ENCODE measurements at regions of chr5 and their contacts with region 1.

Region 1: DNA sequence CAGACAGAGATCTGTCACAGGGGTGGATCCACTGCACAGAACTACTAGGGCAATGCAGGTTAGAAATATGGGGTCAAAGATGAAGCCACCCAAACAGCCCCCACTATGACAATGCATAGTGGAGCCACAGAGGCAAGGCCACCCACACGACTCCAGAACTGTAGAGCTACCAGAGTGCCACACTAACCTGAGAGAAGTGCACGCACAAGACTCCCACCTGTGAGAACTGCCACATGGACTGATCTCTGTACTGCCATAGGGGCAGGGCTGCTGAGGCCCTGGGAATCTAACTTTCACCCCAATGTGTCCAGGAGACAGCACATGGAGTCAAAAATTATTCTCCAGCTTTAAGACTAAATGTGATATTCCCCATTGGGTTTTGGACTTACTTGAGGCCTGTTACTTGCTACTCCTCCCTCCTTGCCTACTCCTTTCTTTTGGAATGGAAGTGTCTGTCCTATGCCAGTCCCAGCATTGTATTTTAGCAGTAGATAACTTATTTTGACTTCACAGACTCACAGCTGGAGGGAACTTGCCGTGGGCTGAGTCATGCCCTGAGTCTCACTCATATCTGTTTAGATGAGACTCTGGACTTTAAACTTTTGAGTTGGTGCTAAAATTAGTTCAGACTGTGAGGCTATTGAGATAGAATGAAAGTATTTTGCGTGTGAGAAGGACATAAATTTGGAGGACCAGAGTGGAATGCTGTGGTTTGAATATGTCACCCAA is 853.3 kb downstream of the MAT2B start:
- DNase-seq: peak; percentile 33 to 86 (median 40)
- ATAC-seq: peak; percentile 72
- H3K4me3 ChIP-seq: peak overlapping the region; percentile 27
- H3K27ac ChIP-seq: peak overlapping the region; percentile 93
- H3K4me1 ChIP-seq: peaks cover 24 to 71% of the 10 kb centered on the region in 2 experiments
- H3K27me3 ChIP-seq: no peaks in the 10 kb centered on the region
- CTCF ChIP-seq: no peak
- EP300 ChIP-seq: peak; percentile 86
- POLR2A ChIP-seq: 0 out of 2 replicates have a peak, but pooled peaks have one; percentile 42
- RAD21 ChIP-seq: no peak

Region 2: DNA sequence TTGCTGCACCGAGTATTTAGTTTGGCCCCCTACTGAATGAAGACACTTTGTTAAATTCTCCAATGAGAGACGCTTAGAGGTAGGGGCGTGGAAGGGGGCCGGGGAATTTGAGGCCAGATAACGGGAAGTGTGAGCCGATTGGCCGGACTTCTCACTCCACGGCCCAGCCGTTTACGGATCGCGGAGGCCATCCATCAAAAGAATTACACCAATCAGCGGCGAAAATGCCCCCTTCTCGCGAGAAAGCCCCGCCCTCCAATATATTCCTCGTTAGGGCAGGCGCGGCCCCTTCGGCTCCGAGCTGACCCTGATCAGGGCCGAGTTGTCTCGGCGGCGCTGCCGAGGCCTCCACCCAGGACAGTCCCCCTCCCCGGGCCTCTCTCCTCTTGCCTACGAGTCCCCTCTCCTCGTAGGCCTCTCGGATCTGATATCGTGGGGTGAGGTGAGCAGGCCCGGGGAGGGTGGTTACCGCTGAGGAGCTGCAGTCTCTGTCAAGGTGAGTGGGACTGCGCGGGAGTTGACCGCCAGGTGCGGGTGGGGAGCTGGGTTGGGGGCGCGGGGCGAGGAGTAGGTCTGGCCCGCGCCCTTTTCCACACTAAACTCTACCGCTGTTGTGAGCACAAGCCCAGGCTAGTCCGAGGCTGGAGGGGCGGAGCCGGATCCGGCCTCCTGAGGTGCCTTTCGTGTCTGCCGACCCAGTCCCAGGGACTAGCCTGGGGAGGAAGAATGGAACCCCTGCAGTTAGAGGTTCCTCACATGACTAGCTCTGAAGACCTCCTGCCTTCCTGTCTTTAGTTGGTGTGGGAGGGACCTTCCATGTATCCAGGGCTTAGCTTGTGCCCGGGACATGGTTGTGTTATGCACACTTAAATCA is 921.1 kb before region 1 on chr5 and contains the start of gene CCNG1:
- CTCF ChIA-PET with region 1: no interaction called
- POLR2A ChIA-PET with region 1: no interaction called
- in situ Hi-C with region 1: no loop called
- intact Hi-C with region 1: loop called (anchors 5 kb)
- DNase-seq: peak; percentile 89 to 98 (median 94)
- ATAC-seq: peak; percentile 84
- H3K4me3 ChIP-seq: peak within 1 kb of the TSS; percentile 71
- H3K27ac ChIP-seq: peak within 1 kb of the TSS; percentile 80
- H3K4me1 ChIP-seq: peaks cover 3 to 33% of the 10 kb centered on the region in 2 experiments; a peak in 4 of 5 replicates
- H3K27me3 ChIP-seq: no peaks in the 10 kb centered on the region
- CTCF ChIP-seq: 0 out of 6 replicates have a peak, but pooled peaks of 1 of the 3 experiments have one; percentile 1
- EP300 ChIP-seq: no peak
- POLR2A ChIP-seq: peak; percentile 96
- RAD21 ChIP-seq: no peak
- polyA plus RNA-seq, gene CCNG1: 254 to 290 TPM

Region 3: GRCh38 chr5:163505368-163506094 is 853.2 kb before region 1 on chr5 and contains the start of gene MAT2B:
- CTCF ChIA-PET with region 1: no interaction called
- POLR2A ChIA-PET with region 1: no interaction called
- in situ Hi-C with region 1: loop called (anchors 25 kb)
- intact Hi-C with region 1: loop called (anchors 5 kb)
- DNase-seq: peak; percentile 95 to 97 (median 96)
- ATAC-seq: peak; percentile 88
- H3K4me3 ChIP-seq: peak within 1 kb of the TSS; percentile 65
- H3K27ac ChIP-seq: peak within 1 kb of the TSS; percentile 87
- H3K4me1 ChIP-seq: peaks cover 5 to 7% of the 10 kb centered on the region in 2 experiments; a peak in 3 of 5 replicates
- H3K27me3 ChIP-seq: no peaks in the 10 kb centered on the region
- CTCF ChIP-seq: peak; percentile 67 to 75 (median 69)
- EP300 ChIP-seq: no peak; the same call in 1 of the 2 replicates
- POLR2A ChIP-seq: peak; percentile 98
- RAD21 ChIP-seq: no peak
- polyA plus RNA-seq, gene MAT2B: 47.1 to 57.7 TPM

Region 4: DNA sequence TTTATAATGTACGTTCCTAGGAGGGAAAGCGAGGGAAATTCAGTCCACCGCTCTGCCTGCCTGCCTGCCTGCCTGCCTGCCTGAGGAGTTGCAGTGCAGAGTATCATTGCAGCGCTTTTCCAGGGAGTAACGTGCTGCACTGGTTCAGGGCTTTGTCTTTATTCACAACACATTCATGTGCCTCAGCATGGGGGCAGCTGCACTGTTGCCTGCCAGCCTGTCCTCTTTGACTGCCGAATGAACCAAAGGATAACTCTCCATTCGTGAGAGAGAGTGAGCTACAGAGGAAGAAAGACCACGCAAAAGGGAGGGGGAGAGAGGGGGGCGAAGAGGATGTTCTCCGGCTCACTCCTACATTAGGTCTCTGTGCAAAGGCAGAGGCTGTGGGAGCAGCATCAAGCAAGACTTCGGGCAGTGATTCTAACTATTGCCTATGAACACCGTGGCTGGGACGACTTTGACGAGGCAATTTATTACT is 62.1 kb before region 1 on chr5:
- CTCF ChIA-PET with region 1: no interaction called
- POLR2A ChIA-PET with region 1: no interaction called
- in situ Hi-C with region 1: no loop called
- intact Hi-C with region 1: loop called (anchors 5 kb)
- DNase-seq: peak in 2 of 4 experiments; percentile 8 to 37
- ATAC-seq: peak; percentile 84
- H3K4me3 ChIP-seq: peak overlapping the region; percentile 3; the same call in 1 of the 2 replicates
- H3K27ac ChIP-seq: 0 out of 3 replicates have a peak overlapping the region, but pooled peaks have one; percentile 7
- H3K4me1 ChIP-seq: peaks cover 0 to 3% of the 10 kb centered on the region in 2 experiments; a peak in 1 of 5 replicates
- H3K27me3 ChIP-seq: no peaks in the 10 kb centered on the region
- CTCF ChIP-seq: no peak
- EP300 ChIP-seq: no peak
- POLR2A ChIP-seq: no peak
- RAD21 ChIP-seq: no peak

Region 5: DNA sequence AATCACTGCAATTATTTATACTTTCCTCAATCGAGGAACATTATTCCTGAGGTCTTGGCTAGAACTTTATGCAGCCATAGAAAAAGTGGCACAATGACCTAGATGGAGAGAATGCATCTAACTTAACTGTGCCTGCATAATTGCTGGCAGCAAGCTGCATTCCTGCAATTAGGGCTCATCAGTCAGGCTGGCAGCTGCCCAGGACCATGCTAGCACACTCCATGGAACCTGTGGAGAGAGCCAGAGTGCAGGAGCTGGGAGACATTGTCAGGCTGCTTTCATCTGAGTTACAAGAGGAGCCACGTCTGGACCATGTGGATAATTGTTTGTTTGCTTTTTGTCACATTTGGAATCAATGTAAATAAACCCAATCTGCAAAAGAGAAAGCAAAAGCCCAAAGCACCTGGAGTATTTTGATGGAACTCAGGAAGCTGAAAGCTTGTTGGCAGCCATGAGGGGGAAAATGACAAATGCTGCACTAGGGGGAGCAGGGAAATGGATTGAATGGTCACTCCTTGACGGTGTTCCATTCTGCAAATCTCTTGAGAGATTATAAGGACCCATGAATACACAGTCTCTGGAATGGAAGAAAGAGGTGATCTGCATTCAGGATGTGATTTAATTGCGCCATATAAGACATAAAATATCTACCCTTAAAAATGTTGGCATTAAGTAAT is 13.4 kb before region 1 on chr5:
- CTCF ChIA-PET with region 1: no interaction called
- POLR2A ChIA-PET with region 1: interaction called, 17 read pairs
- in situ Hi-C with region 1: no loop called
- intact Hi-C with region 1: loop called (anchors 1 kb)
- DNase-seq: peak in 1 of 4 experiments; percentile 14
- ATAC-seq: peak; percentile 15; the same call in 2 of the 3 replicates
- H3K4me3 ChIP-seq: no peak overlapping the region
- H3K27ac ChIP-seq: peak overlapping the region; percentile 73; the same call in 2 of the 3 replicates
- H3K4me1 ChIP-seq: peaks cover 3 to 39% of the 10 kb centered on the region in 2 experiments; a peak in 3 of 5 replicates
- H3K27me3 ChIP-seq: no peaks in the 10 kb centered on the region
- CTCF ChIP-seq: no peak
- EP300 ChIP-seq: no peak
- POLR2A ChIP-seq: no peak
- RAD21 ChIP-seq: no peak

Region 6: GRCh38 chr5:164475339-164475977 is 116.8 kb after region 1 on chr5:
- CTCF ChIA-PET with region 1: no interaction called
- POLR2A ChIA-PET with region 1: no interaction called
- in situ Hi-C with region 1: no loop called
- intact Hi-C with region 1: loop called (anchors 5 kb)
- DNase-seq: peak in 2 of 4 experiments; percentile 18 to 52
- ATAC-seq: peak; percentile 84
- H3K4me3 ChIP-seq: no peak overlapping the region
- H3K27ac ChIP-seq: no peak overlapping the region
- H3K4me1 ChIP-seq: no peaks in the 10 kb centered on the region
- H3K27me3 ChIP-seq: no peaks in the 10 kb centered on the region
- CTCF ChIP-seq: peak; percentile 47 to 85 (median 61); a peak in 5 of 6 replicates
- EP300 ChIP-seq: no peak
- POLR2A ChIP-seq: no peak
- RAD21 ChIP-seq: peak; percentile 93 to 94